ENCODE measurements at regions of chr2 and their contacts with region 1.

Region 1: GRCh38 chr2:70086838-70087701 is at the start of gene PCBP1:
- DNase-seq: peak; percentile 93 to 99 (median 97)
- H3K4me3 ChIP-seq: peak within 1 kb of the TSS; percentile 74 to 84
- H3K4me3 Mint-ChIP-seq: peak within 1 kb of the TSS; percentile 93 to 99 (median 96)
- H3K27ac ChIP-seq: peak within 1 kb of the TSS; percentile 99
- H3K27ac Mint-ChIP-seq: peak within 1 kb of the TSS; percentile 99 to 100 (median 100)
- H3K4me1 ChIP-seq: peaks cover 68% of the 10 kb centered on the region
- H3K4me1 Mint-ChIP-seq: peaks cover 47 to 93% (median 59%) of the 10 kb centered on the region in 4 donors
- H3K27me3 ChIP-seq: no peaks in the 10 kb centered on the region
- H3K27me3 Mint-ChIP-seq: peaks cover 3% of the 10 kb centered on the region in 2 donors
- total RNA-seq, gene PCBP1: 372 to 383 TPM

Region 2: GRCh38 chr2:69893684-69894551 is 193.2 kb before region 1 on chr2 and contains the start of gene SNRNP27:
- CTCF ChIA-PET with region 1: no interaction called
- POLR2A ChIA-PET with region 1: interaction called, 15 read pairs
- intact Hi-C with region 1: no loop called
- DNase-seq: peak; percentile 77 to 81 (median 80)
- H3K4me3 ChIP-seq: peak within 1 kb of the TSS; percentile 94 to 98
- H3K4me3 Mint-ChIP-seq: peak within 1 kb of the TSS; percentile 92 to 100 (median 100)
- H3K27ac ChIP-seq: peak within 1 kb of the TSS; percentile 89
- H3K27ac Mint-ChIP-seq: peak within 1 kb of the TSS; percentile 95 to 99 (median 98)
- H3K4me1 ChIP-seq: peaks cover 28% of the 10 kb centered on the region
- H3K4me1 Mint-ChIP-seq: peaks cover 22 to 53% (median 36%) of the 10 kb centered on the region in 4 donors
- H3K27me3 ChIP-seq: no peaks in the 10 kb centered on the region
- H3K27me3 Mint-ChIP-seq: no peaks in the 10 kb centered on the region
- total RNA-seq, gene SNRNP27: 44.6 to 48.5 TPM

Region 3: DNA sequence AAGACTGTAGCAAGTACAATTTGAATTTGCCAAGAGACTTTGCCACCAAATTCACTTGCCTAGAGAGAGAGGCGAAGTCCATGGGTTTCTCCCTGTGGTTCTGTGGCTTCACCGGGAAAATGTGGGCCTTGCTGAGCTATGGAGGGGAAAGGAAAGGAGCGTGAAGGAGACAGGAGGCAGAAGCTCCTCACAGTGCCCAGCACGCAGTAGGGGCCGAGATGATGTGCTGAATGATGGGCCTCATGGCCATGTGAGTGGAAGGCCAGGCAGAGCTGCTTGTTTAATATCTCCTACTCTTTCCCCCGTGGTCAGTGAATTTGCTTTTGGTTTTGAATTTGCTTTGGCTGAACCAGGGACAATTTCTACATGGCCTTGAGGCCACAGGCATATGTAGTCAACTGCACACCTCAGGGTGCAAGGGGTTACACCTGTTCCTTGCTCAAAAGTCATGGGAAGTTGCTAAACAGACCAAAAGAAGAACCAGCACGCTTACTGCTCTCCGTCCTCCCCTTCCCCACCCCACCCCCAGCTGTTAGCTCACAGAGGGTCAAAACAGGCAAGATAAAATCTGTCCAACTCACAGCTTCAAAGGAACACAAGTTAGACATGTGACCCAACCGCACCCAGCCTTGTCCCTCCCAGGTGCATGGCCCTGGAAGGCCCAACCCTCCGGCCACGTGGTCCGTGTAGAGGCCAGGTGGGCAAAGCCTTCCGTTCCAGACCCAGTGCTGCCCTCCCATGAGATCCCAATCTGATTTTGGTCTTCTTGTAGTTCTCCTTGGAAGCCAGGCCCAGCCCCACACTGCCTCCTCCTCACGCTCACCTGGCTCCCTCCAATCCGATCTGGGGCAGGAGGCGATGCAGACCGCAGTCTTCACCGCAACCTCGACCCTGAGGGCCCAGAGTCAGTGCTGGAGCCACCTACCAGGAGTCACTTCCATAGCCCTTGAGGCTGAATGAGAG is 111.3 kb before region 1 on chr2:
- CTCF ChIA-PET with region 1: no interaction called
- POLR2A ChIA-PET with region 1: no interaction called
- intact Hi-C with region 1: no loop called
- DNase-seq: no peak
- H3K4me3 ChIP-seq: no peak overlapping the region
- H3K4me3 Mint-ChIP-seq: no peak overlapping the region
- H3K27ac ChIP-seq: no peak overlapping the region
- H3K27ac Mint-ChIP-seq: peak overlapping the region in 4 of 7 donors; percentile 8 to 64 (median 38)
- H3K4me1 ChIP-seq: no peaks in the 10 kb centered on the region
- H3K4me1 Mint-ChIP-seq: peaks cover 0 to 22% (median 10%) of the 10 kb centered on the region in 4 donors
- H3K27me3 ChIP-seq: no peaks in the 10 kb centered on the region
- H3K27me3 Mint-ChIP-seq: no peaks in the 10 kb centered on the region

Region 4: DNA sequence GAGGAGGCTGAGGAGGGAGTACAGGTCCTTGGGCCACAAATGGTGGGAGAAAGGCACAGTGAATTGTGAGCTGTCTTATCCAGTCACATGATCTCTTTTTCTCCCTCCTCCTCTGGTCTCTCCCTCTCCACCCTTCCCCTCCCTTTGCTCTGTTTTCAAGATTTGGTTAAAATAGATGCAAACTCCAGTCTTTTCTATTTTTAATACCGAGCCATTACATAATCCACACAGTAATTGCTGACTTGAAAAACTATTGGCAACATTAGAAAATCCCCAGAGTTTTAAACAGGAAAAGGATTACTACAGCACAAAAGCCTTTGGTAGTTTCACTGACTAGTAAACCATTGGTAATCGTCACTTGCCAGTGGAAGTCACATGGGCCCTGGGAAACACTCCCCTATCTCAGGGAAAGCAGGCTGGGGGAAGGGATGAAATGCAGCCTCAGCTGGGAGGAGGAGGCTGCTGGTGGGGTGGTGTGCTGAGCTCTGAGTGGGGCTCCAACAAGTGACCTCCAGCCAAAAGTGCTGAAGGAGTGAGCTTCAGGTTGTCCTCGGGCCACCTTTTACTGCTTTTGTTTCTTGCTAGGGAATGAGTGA is 57.2 kb before region 1 on chr2:
- CTCF ChIA-PET with region 1: no interaction called
- POLR2A ChIA-PET with region 1: no interaction called
- intact Hi-C with region 1: no loop called
- DNase-seq: no peak
- H3K4me3 ChIP-seq: no peak overlapping the region
- H3K4me3 Mint-ChIP-seq: no peak overlapping the region
- H3K27ac ChIP-seq: no peak overlapping the region
- H3K27ac Mint-ChIP-seq: peak overlapping the region in 1 of 7 donors; percentile 7
- H3K4me1 ChIP-seq: no peaks in the 10 kb centered on the region
- H3K4me1 Mint-ChIP-seq: peaks cover 0 to 10% (median 3%) of the 10 kb centered on the region in 4 donors
- H3K27me3 ChIP-seq: no peaks in the 10 kb centered on the region
- H3K27me3 Mint-ChIP-seq: no peaks in the 10 kb centered on the region

Region 5: GRCh38 chr2:70104231-70105111 is 17.4 kb after region 1 on chr2:
- CTCF ChIA-PET with region 1: interaction called, 15 read pairs
- POLR2A ChIA-PET with region 1: interaction called, 481 read pairs
- intact Hi-C with region 1: loop called (anchors 1 kb)
- DNase-seq: peak in 2 of 5 donors; percentile 32
- H3K4me3 ChIP-seq: peak overlapping the region in 1 of 2 donors; percentile 23
- H3K4me3 Mint-ChIP-seq: peak overlapping the region; percentile 62 to 82 (median 78)
- H3K27ac ChIP-seq: peak overlapping the region; percentile 57
- H3K27ac Mint-ChIP-seq: peak overlapping the region; percentile 87 to 95 (median 94)
- H3K4me1 ChIP-seq: peaks cover 47% of the 10 kb centered on the region
- H3K4me1 Mint-ChIP-seq: peaks cover 31 to 61% (median 46%) of the 10 kb centered on the region in 4 donors
- H3K27me3 ChIP-seq: no peaks in the 10 kb centered on the region
- H3K27me3 Mint-ChIP-seq: no peaks in the 10 kb centered on the region

Region 6: DNA sequence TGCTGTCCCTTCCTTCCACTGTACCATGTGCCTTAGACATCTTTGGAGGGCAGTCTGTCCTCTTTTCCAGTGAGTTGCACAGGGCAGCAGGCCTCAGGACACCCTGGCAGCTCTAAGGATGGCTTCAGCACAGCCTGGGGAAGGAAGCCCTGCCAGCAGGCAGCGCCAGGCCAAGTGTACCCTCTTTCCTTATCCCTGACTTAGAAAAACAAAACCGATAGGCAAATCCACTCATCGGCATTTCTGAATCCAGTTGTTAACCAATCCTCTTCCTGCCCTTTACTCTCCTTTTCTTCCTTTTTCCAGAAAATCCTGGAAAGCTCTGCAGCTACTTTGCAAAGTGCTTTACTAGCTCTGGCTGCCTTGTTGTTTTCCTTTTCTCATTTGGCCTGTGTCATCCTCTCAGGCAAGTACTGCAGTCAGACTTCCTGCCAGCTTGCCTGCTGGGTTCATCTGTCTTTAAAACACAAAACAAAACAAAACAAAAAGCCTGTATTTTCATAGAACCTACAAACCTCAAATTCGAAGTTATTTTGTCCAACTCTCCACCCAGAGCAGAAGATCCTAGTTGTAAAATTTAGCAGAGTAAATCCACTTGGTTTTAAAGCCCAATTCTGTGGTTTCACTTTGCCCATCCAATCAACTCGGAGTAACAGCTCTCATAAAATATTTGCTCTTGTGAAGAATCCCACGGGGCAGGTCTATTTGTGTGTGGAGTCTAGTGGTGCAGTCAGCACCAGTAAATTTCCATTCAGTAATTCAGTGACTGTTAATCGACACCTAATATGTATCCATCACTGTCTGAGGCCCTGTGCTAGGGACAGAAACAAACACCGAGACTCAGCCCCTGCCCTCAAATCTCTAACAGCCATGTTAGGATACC is 45.4 kb after region 1 on chr2:
- CTCF ChIA-PET with region 1: interaction called, 17 read pairs
- POLR2A ChIA-PET with region 1: interaction called, 2,231 read pairs
- intact Hi-C with region 1: loop called (anchors 1 kb)
- DNase-seq: peak; percentile 52 to 72 (median 63)
- H3K4me3 ChIP-seq: peak overlapping the region; percentile 24 to 55
- H3K4me3 Mint-ChIP-seq: peak overlapping the region; percentile 81 to 92 (median 86)
- H3K27ac ChIP-seq: peak overlapping the region; percentile 83
- H3K27ac Mint-ChIP-seq: peak overlapping the region; percentile 92 to 100 (median 97)
- H3K4me1 ChIP-seq: peaks cover 87% of the 10 kb centered on the region
- H3K4me1 Mint-ChIP-seq: peaks cover 54 to 88% (median 66%) of the 10 kb centered on the region in 4 donors
- H3K27me3 ChIP-seq: no peaks in the 10 kb centered on the region
- H3K27me3 Mint-ChIP-seq: no peaks in the 10 kb centered on the region

Region 7: GRCh38 chr2:70190418-70191243 is 103.6 kb after region 1 on chr2 and contains the start of gene C2orf42:
- CTCF ChIA-PET with region 1: interaction called, 6 read pairs
- POLR2A ChIA-PET with region 1: interaction called, 61 read pairs
- intact Hi-C with region 1: loop called (anchors 1 kb)
- DNase-seq: peak; percentile 96 to 97 (median 97)
- H3K4me3 ChIP-seq: peak within 1 kb of the TSS; percentile 93 to 96
- H3K4me3 Mint-ChIP-seq: peak within 1 kb of the TSS; percentile 90 to 98 (median 96)
- H3K27ac ChIP-seq: peak within 1 kb of the TSS; percentile 81
- H3K27ac Mint-ChIP-seq: peak within 1 kb of the TSS; percentile 98 to 100 (median 99)
- H3K4me1 ChIP-seq: peaks cover 15% of the 10 kb centered on the region
- H3K4me1 Mint-ChIP-seq: peaks cover 15 to 25% (median 20%) of the 10 kb centered on the region in 4 donors
- H3K27me3 ChIP-seq: no peaks in the 10 kb centered on the region
- H3K27me3 Mint-ChIP-seq: peaks cover 0 to 1% of the 10 kb centered on the region in 2 donors
- total RNA-seq, gene C2orf42: 36.7 to 47.9 TPM